Right cardiac atrium (tissue), 5 donors: ENCODE measurements at regions of chr1 and their contacts with region 1.

Region 1: DNA sequence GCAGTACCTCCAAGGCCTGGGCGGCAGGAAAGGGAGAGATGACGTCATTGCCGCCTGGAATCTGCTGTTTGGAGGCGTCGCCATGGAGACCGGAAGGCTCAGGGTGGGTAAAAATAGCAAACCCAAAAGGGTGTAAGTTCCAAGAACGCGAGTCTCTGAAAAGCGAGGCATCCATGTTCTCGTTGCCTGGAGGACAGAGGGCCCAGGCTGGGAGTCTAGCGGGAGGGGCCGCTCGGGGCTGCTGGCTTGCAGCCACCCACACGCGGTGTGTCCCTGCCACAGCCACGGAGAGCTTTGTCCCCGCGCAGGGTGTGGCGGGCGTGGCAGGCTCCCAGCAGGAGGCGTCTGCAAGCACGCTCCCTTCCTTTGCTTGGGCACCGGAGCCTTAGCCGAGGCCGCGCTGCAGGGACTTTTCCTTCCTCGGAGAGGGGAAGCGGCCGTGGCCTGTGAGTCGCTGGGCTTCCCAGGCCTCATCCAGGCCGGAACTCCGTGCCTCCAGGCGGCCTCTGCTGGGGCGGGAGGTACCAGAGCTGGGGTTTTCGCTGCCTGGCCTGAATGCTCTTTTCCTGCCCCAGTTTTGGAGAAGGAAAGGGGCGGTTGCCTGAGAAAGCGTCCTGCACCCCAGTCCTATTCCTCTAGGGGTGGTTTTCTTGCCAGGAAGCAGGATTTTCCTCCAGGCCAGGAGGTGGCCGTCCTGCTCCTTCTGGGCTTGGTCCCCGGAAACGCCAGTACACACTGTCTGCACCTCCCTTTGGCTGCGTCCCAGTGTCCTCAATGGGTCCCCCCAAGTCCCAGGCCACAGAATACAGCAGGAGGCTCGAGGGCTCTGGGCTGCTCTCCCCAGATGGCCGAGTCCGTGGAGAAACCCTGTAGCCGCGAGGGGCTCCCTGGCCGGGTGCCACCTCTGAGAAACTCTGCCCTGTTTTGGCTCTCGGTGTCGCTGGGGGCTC is 15.3 kb upstream of the SKI start:
- DNase-seq: peak; percentile 96 to 98 (median 97)
- ATAC-seq: peak; percentile 69 to 79
- H3K4me3 ChIP-seq: no peak overlapping the region
- H3K27ac ChIP-seq: peak overlapping the region; percentile 94
- H3K4me1 ChIP-seq: peaks cover 21% of the 10 kb centered on the region
- H3K27me3 ChIP-seq: no peaks in the 10 kb centered on the region

Region 2: DNA sequence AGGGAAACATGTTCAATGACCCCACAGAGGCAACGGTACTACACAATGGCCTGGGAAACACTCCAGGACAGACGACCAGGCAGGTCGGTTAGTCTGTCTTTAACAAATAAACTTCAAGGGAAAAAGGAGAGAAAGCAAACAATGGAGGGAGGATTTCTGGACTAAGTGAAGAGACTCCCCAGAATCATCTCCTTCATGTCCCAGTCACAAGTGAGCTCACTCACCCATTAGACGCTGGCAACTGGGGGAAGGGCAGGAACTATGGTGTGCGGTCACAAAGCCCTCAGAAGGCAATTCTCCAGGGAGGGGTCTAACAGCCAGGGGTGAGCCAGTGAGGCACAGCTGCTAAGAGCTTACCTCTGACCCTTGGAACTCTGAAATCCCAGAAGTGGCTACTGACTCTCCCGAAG is 378.9 kb before region 1 on chr1:
- intact Hi-C with region 1: no loop called
- DNase-seq: no peak
- ATAC-seq: peak in 1 of 2 donors; percentile 30
- H3K4me3 ChIP-seq: no peak overlapping the region
- H3K27ac ChIP-seq: no peak overlapping the region
- H3K4me1 ChIP-seq: peaks cover 9% of the 10 kb centered on the region
- H3K27me3 ChIP-seq: no peaks in the 10 kb centered on the region

Region 3: GRCh38 chr1:2227346-2228153 is 14.7 kb after region 1 on chr1:
- intact Hi-C with region 1: loop called in 1 of 4 experiments (anchors 2 kb)
- DNase-seq: peak; percentile 97 to 99 (median 99)
- ATAC-seq: peak; percentile 87 to 90
- H3K4me3 ChIP-seq: peak overlapping the region; percentile 94
- H3K27ac ChIP-seq: peak overlapping the region; percentile 98
- H3K4me1 ChIP-seq: peaks cover 7% of the 10 kb centered on the region
- H3K27me3 ChIP-seq: no peaks in the 10 kb centered on the region

Region 4: GRCh38 chr1:2381741-2382620 is 169.2 kb after region 1 on chr1:
- intact Hi-C with region 1: no loop called
- DNase-seq: peak; percentile 89 to 95 (median 94)
- ATAC-seq: peak; percentile 94 to 95
- H3K4me3 ChIP-seq: no peak overlapping the region
- H3K27ac ChIP-seq: no peak overlapping the region
- H3K4me1 ChIP-seq: no peaks in the 10 kb centered on the region
- H3K27me3 ChIP-seq: no peaks in the 10 kb centered on the region